Motor neuron (in vitro differentiated cells): ENCODE measurements at regions of chr3 and their contacts with region 1.

Region 1: DNA sequence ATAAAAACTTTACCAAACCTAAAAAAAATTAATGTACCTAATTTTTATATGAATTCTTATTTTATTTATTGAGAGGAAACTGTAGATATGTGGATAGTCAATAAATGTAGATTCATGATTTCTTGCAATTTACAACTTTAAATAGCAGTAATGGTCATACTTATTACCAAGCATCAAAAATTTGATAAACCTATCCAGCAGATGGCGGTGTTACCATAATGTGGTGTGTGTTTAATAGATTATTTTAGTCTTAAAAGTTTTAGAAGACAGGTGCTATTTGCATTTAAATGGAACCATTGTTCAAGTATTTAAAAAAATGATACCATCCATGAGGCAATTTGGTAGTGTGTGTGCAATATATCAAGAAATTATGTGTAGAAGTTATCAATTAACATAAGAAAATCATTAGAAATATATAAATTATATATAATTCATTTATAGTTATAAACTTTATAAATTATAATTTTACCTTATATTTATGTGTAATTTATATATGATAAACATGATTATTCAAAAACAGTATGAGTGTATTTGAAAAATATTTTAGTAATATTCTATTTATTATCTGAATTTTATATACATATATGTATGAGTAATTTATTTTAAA is 176.0 kb upstream of the BCHE start:
- ATAC-seq: no peak
- H3K4me3 ChIP-seq: no peak overlapping the region
- H3K27ac ChIP-seq: no peak overlapping the region
- H3K4me1 ChIP-seq: no peaks in the 10 kb centered on the region

Region 2: DNA sequence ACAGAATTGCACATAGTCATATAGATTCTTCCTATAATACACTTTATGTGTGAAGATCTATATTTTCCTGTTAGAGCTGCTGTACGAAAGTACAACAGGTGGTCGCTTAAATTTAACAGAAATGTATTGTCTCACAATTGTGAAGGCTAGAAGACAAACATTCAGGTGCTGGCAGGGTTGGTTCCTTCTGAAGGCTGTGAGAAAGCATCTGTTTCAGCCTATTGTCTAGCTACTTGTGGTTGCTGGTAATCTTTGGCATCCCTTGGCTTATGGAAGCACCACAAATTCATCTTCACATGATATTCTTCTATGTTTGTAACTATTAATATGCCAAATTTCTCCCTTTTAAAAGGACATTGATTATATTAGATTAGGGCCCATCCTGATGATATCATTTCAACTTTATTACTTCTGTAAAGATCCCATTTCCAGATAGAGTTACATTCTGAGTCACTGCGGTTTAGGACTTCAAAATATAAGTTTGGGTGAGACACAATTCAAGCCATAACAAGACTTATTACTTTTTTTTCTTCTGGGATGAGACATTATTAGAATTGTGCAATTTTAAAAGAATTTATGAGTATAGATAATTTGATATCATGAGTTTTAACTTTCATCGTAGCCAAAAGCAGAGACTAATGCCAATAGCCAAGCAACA is 72.1 kb after region 1 on chr3:
- in situ Hi-C with region 1: no loop called
- ATAC-seq: no peak
- H3K4me3 ChIP-seq: no peak overlapping the region
- H3K27ac ChIP-seq: no peak overlapping the region
- H3K4me1 ChIP-seq: no peaks in the 10 kb centered on the region

Region 3: GRCh38 chr3:166478356-166478755 is 465.2 kb after region 1 on chr3:
- in situ Hi-C with region 1: no loop called
- ATAC-seq: no peak
- H3K4me3 ChIP-seq: no peak overlapping the region
- H3K27ac ChIP-seq: no peak overlapping the region
- H3K4me1 ChIP-seq: no peaks in the 10 kb centered on the region

Region 4: GRCh38 chr3:167032261-167032876 is 1019.2 kb after region 1 on chr3:
- in situ Hi-C with region 1: loop called in 1 of 9 experiments (anchors 25 kb)
- ATAC-seq: peak in 2 of 8 experiments; percentile 42 to 61
- H3K4me3 ChIP-seq: no peak overlapping the region
- H3K27ac ChIP-seq: no peak overlapping the region
- H3K4me1 ChIP-seq: peaks cover 3 to 4% of the 10 kb centered on the region in 2 donors

Region 5: DNA sequence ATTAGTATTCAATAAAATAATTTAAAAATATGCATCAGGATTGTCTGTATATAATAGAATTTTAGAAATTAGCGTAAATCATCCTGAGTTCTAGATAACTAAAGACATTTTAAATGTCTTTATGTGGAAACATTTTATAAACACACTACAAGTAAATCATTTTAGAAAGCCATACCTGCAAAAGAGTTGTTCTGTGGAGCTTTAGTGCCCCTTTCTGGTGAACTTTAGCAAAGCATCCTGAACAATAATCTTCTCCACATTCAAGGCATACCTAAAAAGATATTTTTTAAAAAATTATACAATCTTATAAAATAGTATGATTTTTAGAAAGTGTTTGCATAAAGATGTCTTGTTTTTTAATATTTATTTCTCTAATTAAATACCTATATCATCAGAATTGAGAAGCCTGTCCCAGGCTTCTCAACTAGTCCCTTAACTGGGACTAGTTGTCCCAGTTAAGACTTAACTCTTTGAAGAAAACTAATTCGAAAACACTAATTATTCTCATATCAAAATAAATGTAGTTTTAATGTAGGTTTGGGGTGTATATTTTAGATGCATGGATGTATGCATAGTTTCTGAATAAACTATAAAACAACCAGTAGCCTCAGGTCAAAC is 1337.2 kb after region 1 on chr3:
- in situ Hi-C with region 1: loop called in 1 of 9 experiments (anchors 25 kb)
- ATAC-seq: no peak
- H3K4me3 ChIP-seq: no peak overlapping the region
- H3K27ac ChIP-seq: no peak overlapping the region
- H3K4me1 ChIP-seq: no peaks in the 10 kb centered on the region